Prostate gland (tissue), 2 donors: ENCODE measurements at regions of chr5 and their contacts with region 1.

Region 1: DNA sequence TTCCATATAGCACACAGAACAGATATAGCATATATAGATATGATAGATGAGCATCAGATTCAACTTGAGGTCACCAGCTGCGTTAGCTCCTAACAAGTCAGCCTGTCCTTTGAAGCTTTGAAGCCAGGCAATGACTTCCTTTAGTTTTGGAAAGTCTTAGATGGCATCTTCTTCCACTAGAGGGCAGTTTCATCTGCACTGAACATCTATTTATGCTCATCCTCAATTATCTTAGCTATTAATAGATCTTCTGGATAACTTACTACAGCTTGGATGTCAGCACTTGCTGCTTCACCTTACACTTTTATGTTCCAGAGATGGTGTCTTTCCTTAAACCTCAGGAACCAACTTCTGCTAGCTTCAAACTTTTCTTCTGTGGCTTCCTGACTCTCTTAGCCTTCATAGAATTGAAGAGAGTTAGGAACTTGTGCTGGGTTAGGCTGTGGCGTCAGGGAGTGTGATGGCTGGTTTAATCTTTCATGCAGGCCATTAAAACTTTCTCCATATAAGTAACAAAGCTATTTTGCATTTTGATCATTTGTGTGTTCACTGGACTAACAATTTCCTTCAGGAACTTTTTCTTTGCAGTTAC is 1401.4 kb downstream of the EFNA5 start:
- DNase-seq: no peak
- H3K4me3 ChIP-seq: no peak overlapping the region
- H3K27ac ChIP-seq: no peak overlapping the region
- H3K4me1 ChIP-seq: no peaks in the 10 kb centered on the region
- H3K27me3 ChIP-seq: no peaks in the 10 kb centered on the region
- CTCF ChIP-seq: peak in 2 of 4 experiments; percentile 19 to 38
- POLR2A ChIP-seq: no peak

Region 2: DNA sequence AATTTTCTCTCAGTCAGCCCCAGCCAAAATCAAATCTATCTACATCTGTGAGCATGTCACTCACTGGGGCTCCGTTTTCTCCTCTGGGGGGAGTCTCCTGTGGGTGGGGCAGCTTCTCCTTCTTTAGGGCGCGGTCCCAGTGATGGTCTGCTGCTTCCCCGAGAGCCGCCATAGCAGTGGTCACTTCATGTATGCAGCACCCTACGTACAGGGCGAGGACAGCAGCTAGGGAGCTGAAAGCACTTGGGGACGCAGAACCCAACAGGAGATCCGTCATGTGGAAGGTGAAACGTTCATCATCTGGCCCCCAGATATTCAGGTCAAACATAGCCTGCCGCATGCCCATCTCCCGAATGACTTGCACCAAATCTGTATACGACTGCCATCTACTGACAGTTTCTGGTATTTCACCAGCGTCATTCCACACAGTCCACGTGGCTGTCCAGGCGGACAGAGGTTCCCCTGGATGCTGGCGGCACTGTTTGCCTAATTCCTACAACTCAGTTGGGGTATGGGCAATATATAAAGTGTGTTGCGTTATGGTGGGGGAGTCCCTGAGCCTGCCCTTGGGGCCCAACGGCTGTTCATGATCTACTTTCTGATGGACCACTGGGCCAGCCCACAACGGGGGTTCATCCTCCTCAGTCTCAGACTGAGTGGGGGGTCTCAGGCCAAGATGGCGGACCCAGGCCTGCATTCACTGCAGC is 606.4 kb after region 1 on chr5:
- intact Hi-C with region 1: loop called (anchors 10 kb)
- DNase-seq: no peak
- H3K4me3 ChIP-seq: no peak overlapping the region
- H3K27ac ChIP-seq: no peak overlapping the region
- H3K4me1 ChIP-seq: no peaks in the 10 kb centered on the region
- H3K27me3 ChIP-seq: no peaks in the 10 kb centered on the region
- CTCF ChIP-seq: peak in 3 of 4 experiments; percentile 35 to 40 (median 37)
- POLR2A ChIP-seq: no peak